ENCODE measurements at regions of chr6 and their contacts with region 1.

Region 1: GRCh38 chr6:83514866-83515466 is 2.6 kb downstream of the PRSS35 start:
- DNase-seq: no peak
- H3K4me3 ChIP-seq: no peak overlapping the region
- H3K27ac ChIP-seq: no peak overlapping the region
- H3K4me1 ChIP-seq: peaks cover 13% of the 10 kb centered on the region
- H3K27me3 ChIP-seq: peaks cover 6% of the 10 kb centered on the region
- CTCF ChIP-seq: peak; percentile 78

Region 2: DNA sequence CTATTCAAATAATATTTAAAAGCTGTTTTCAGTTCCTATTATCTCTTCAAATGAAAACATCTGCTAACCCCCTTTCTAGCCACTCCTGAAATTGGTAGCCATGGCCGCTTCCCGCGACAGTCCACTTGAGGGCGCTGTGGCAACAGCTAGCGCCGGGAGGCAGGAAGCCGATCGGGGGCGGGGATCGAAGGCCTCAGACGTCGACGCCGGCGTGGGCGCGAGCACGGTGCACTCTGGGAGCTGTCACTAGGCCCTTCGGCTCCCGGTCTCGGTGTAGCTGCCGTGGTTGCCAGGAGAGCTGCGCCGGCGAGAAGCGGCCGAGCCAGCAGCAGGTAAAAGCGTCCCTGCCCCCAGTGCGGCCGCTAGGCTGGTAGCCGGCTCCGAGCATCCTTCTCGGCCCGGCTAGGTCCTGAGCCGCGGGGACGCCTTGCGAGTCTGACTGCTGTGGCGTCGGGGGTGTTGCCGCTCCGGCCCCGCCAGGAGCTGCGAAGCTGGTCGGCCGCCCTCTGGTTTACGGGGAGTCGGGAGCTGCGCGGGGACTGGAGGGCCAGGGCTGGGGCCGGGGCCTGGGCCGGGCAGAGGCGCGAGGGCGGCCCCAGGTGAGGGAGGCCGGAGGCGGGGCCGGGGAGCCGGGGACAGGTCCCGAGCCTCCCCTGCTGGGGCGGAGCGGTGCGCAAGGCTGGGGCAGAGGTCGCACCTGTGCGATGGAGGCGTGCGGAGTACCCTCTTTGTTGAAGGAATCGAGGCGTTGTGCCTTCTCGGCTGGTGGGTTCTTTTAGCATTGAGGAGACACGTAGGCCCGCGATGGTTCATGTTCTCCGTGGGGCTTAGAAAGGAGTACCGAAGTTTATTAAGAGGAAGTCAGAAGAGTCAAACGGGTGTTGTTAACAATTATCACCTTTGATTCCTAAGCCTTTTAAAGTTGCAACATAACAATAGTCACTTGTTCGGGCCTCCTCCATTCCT is 447.2 kb before region 1 on chr6 and contains the start of gene DOP1A:
- intact Hi-C with region 1: loop called (anchors 10 kb)
- DNase-seq: peak; percentile 97
- H3K4me3 ChIP-seq: peak within 1 kb of the TSS; percentile 80
- H3K27ac ChIP-seq: peak within 1 kb of the TSS; percentile 84
- H3K4me1 ChIP-seq: peaks cover 74% of the 10 kb centered on the region
- H3K27me3 ChIP-seq: no peaks in the 10 kb centered on the region
- CTCF ChIP-seq: peak; percentile 99
- total RNA-seq, gene DOP1A: 18.1 TPM

Region 3: DNA sequence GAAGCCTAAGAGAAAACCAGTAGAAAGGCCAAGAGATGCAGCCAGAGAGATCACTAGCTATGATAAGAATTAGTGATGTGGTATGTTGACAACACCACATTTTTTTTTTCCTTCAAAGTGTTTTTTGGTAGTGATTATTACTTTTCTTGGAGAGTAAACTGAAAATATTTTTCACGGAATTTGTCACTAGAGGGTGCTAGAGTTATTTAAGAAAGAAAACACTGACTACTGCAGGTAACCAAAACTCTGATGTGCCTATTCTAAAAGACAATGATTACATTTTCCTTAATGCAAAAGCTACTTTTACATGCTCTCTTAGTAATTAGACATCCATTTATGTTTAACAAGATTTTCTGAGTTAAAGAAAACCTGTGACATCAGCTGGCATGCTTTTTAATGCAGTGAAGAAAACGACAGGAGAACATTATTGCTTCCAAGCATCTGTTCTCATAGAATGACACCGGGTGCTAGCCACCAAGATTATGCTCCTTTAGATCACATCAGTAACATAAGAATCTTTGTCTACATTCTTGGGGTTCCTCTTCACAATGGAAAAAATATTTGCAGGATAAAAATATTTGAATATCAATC is 293.0 kb before region 1 on chr6:
- intact Hi-C with region 1: loop called (anchors 2 kb)
- DNase-seq: no peak
- H3K4me3 ChIP-seq: no peak overlapping the region
- H3K27ac ChIP-seq: no peak overlapping the region
- H3K4me1 ChIP-seq: no peaks in the 10 kb centered on the region
- H3K27me3 ChIP-seq: no peaks in the 10 kb centered on the region
- CTCF ChIP-seq: peak; percentile 63

Region 4: GRCh38 chr6:83365931-83366330 is 149.0 kb before region 1 on chr6:
- intact Hi-C with region 1: no loop called
- DNase-seq: no peak
- H3K4me3 ChIP-seq: no peak overlapping the region
- H3K27ac ChIP-seq: no peak overlapping the region
- H3K4me1 ChIP-seq: peaks cover 7% of the 10 kb centered on the region
- H3K27me3 ChIP-seq: no peaks in the 10 kb centered on the region
- CTCF ChIP-seq: no peak

Region 5: DNA sequence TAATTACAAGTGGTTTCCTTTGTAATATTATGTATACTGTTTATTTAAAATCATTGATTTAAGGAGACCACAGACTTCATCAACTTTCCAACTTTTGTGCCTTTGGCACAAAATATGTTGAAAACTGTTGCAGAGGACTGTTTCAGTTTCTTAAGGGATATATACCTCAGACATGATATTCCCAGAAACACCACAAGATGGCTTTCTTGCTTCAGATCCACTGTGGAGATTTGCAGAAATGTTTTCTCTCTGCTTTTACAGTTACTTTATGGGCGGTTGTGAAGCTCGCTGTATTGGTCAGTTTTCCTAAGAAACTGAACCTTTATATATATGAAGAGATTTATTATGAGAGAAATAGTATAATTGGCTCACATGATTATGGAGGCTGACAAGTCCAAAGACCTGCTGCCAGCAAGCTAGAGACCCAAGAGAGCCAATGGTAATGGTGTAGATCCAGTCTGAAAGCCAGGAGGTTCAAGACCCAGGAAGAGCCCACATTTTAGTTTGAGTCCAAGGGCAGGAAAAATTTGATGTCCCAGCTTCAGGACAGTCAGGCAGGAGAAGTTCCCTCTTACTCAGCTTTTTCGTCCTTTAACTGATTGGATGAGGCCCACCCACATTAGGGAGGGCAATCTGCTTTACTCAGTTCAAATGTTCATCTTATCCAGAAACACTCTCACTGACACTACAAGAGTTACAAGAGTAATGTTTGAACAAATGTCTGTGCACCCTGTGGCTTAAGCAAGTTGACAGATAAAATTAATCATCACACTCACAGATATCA is 96.9 kb before region 1 on chr6:
- intact Hi-C with region 1: loop called (anchors 5 kb)
- DNase-seq: no peak
- H3K4me3 ChIP-seq: no peak overlapping the region
- H3K27ac ChIP-seq: no peak overlapping the region
- H3K4me1 ChIP-seq: no peaks in the 10 kb centered on the region
- H3K27me3 ChIP-seq: no peaks in the 10 kb centered on the region
- CTCF ChIP-seq: peak; percentile 63